Common myeloid progenitor, CD34-positive (primary cell): ENCODE measurements at regions of chr3 and their contacts with region 1.

Region 1: DNA sequence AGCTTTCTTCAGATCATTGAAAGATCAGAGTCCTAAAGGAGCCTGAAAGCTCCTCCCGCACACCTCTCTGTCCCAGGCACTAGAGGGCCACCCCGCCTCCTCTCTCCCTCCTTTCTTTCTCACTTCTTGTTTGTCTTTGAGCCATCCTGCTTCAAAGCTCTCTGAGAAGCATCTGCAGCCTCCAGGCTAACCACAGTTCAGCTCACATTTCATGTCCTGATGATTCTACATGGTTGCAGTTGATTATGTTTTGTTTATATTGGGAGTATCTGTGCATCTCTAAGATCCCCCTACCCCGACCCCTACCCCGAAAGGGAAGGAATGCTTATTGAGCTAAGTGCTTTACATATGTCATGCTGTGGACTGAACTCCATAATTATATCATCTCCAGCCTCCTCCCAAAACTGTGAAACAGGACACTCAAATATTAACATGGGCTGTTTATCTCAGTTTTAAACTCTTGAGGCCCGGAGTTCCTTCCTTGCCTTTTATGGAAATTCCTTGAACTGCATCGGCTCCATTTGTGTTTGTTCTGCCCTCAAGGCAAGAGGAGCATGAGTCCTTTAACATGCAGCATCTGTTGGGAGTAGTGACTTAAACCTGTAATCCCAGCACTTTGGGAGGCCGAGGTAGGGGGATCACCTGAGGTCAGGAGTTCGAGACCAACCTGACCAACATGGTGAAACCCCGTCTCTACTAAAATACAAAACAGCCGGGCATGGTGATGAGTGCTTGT is 30.9 kb downstream of the MGLL start:
- DNase-seq: peak; percentile 42 to 78 (median 72)
- H3K4me3 ChIP-seq: no peak overlapping the region
- H3K27ac ChIP-seq: peak overlapping the region; percentile 19 to 38
- H3K4me1 ChIP-seq: peaks cover 0 to 60% (median 44%) of the 10 kb centered on the region in 4 experiments
- H3K27me3 ChIP-seq: no peaks in the 10 kb centered on the region

Region 2: GRCh38 chr3:127389420-127389819 is 402.0 kb before region 1 on chr3:
- CTCF ChIA-PET with region 1: no interaction called
- POLR2A ChIA-PET with region 1: no interaction called
- DNase-seq: no peak
- H3K4me3 ChIP-seq: no peak overlapping the region
- H3K27ac ChIP-seq: no peak overlapping the region
- H3K4me1 ChIP-seq: no peaks in the 10 kb centered on the region
- H3K27me3 ChIP-seq: peaks cover 0 to 65% (median 4%) of the 10 kb centered on the region in 5 experiments

Region 3: DNA sequence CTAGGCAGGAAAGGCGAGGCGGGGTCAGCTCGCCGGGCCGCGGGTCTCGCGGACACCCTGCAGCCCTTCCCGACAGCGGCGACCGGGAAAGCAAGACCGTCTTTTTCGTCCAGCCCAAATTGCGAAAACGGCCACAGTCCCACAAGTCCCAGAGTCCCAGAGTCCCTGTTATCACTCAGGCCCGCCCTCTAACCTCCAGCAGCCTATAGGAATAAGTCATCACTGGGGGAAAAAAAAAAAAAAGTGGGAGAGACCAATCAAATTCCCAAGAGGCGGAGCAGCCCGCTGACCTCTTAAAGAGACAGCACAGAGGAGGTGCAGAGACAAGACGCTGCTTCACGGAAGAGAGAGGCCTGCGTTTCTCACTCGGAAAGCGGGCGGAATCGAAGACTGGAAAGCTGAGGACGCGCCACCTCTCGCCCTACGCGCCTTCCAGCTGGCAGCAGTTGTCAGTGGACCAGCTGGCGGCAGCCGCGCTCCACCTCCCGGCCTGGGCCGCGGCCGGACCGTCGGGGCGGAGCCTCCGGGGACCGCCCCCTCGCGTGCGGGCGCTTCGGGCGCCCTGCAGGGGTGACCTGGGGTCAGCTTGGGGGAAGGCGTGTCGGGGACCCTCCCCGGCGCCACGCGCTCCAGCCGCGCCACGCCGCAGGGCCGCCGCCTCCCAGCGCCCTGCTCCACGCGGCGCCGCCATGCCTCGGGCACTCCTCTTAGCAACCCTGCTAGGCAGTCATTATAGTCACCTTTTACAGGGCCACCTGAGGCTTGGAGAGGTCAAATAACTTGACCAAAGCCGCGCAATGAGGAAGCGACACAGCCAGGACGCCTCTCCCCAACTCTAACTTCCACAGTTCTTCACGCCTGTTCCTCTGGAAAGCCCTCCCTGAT is 200.5 kb before region 1 on chr3 and contains the start of gene TPRA1:
- CTCF ChIA-PET with region 1: no interaction called
- POLR2A ChIA-PET with region 1: no interaction called
- DNase-seq: peak; percentile 96 to 98 (median 98)
- H3K4me3 ChIP-seq: peak within 1 kb of the TSS; percentile 71 to 94 (median 85)
- H3K27ac ChIP-seq: peak within 1 kb of the TSS; percentile 85 to 94
- H3K4me1 ChIP-seq: peaks cover 0 to 32% (median 27%) of the 10 kb centered on the region in 4 experiments
- H3K27me3 ChIP-seq: no peaks in the 10 kb centered on the region

Region 4: GRCh38 chr3:127750226-127751031 is 41.0 kb before region 1 on chr3:
- CTCF ChIA-PET with region 1: interaction called, 21 read pairs
- POLR2A ChIA-PET with region 1: interaction called, 4 read pairs
- DNase-seq: peak in 2 of 3 donors; percentile 89 to 91
- H3K4me3 ChIP-seq: peak overlapping the region in 1 of 7 experiments; percentile 1
- H3K27ac ChIP-seq: no peak overlapping the region
- H3K4me1 ChIP-seq: peaks cover 0 to 56% (median 50%) of the 10 kb centered on the region in 4 experiments
- H3K27me3 ChIP-seq: no peaks in the 10 kb centered on the region

Region 5: DNA sequence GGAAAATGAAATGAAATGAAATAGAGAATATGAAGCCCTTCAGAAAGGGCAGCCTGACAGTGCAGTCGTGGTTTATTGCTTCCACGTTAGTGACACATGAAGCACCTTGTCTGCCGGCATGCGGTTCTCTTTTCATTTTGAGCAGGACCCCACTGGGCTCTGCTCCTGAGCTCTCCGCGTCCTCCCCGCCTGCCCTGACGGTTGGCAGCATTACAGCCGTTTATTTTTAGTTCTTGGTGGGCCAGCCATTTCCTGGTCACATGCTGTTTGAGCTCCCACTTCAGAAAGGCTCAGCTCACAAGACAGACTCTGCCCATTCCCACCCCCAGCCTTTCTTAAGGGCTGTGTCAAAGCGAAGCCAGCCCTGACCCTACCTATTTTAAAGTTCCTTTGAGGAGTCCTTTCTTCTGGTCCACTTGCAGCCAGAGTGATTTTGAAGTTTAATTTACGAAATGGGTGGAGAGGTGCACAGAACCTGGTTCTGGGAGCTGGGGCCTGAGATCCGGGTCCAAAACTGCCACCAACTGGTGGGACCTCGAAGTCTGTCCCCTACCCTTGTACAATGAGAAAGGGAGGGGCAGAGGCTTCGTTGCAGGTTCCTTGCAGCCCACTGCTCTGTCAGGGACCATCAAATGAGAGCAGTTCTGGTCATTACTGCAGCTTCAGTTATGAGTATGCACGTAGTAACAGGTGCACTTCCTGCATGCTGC is 29.1 kb before region 1 on chr3:
- CTCF ChIA-PET with region 1: interaction called, 109 read pairs
- POLR2A ChIA-PET with region 1: interaction called, 6 read pairs
- DNase-seq: peak; percentile 58 to 91 (median 80)
- H3K4me3 ChIP-seq: peak overlapping the region in 4 of 7 experiments; percentile 17 to 59 (median 52)
- H3K27ac ChIP-seq: peak overlapping the region; percentile 20 to 75
- H3K4me1 ChIP-seq: peaks cover 8 to 84% (median 73%) of the 10 kb centered on the region in 4 experiments
- H3K27me3 ChIP-seq: no peaks in the 10 kb centered on the region

Region 6: DNA sequence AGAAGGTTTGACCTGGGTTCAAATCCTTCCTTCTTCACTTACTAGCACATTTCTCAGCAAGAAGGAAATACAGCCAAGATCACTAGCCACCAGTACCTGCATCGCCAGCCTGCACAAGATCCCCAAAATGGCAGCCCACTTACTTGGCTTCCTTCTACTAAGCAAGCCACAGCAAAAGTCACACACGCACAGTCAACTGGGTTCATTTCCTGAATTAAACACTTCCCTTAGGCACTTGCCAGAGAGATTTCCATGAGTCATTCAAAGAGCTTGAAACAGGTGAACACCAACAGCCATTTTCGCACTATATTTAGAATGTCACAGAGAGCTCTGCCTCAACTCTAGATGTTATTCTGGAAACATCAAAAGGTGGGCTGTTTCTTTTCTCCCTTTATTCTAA is 11.6 kb before region 1 on chr3:
- CTCF ChIA-PET with region 1: interaction called, 29 read pairs
- POLR2A ChIA-PET with region 1: no interaction called
- DNase-seq: peak; percentile 59 to 89 (median 70)
- H3K4me3 ChIP-seq: peak overlapping the region in 2 of 7 experiments; percentile 24 to 25
- H3K27ac ChIP-seq: peak overlapping the region in 1 of 2 experiments; percentile 36
- H3K4me1 ChIP-seq: peaks cover 3 to 55% (median 48%) of the 10 kb centered on the region in 4 experiments
- H3K27me3 ChIP-seq: no peaks in the 10 kb centered on the region

Region 7: GRCh38 chr3:127822698-127823425 is 31.5 kb after region 1 on chr3:
- CTCF ChIA-PET with region 1: interaction called, 82 read pairs
- POLR2A ChIA-PET with region 1: interaction called, 7 read pairs
- DNase-seq: peak; percentile 47 to 76 (median 71)
- H3K4me3 ChIP-seq: peak overlapping the region; percentile 69 to 92 (median 89)
- H3K27ac ChIP-seq: peak overlapping the region; percentile 50 to 81
- H3K4me1 ChIP-seq: peaks cover 11 to 57% (median 43%) of the 10 kb centered on the region in 4 experiments
- H3K27me3 ChIP-seq: no peaks in the 10 kb centered on the region

Region 8: GRCh38 chr3:127831723-127832172 is 40.4 kb after region 1 on chr3:
- CTCF ChIA-PET with region 1: interaction called, 82 read pairs
- POLR2A ChIA-PET with region 1: no interaction called
- DNase-seq: peak; percentile 67 to 86 (median 81)
- H3K4me3 ChIP-seq: no peak overlapping the region
- H3K27ac ChIP-seq: no peak overlapping the region
- H3K4me1 ChIP-seq: peaks cover 5 to 15% (median 8%) of the 10 kb centered on the region in 4 experiments
- H3K27me3 ChIP-seq: no peaks in the 10 kb centered on the region